Tibial artery (tissue), 4 donors: ENCODE measurements at regions of chr2 and their contacts with region 1.

Region 1: DNA sequence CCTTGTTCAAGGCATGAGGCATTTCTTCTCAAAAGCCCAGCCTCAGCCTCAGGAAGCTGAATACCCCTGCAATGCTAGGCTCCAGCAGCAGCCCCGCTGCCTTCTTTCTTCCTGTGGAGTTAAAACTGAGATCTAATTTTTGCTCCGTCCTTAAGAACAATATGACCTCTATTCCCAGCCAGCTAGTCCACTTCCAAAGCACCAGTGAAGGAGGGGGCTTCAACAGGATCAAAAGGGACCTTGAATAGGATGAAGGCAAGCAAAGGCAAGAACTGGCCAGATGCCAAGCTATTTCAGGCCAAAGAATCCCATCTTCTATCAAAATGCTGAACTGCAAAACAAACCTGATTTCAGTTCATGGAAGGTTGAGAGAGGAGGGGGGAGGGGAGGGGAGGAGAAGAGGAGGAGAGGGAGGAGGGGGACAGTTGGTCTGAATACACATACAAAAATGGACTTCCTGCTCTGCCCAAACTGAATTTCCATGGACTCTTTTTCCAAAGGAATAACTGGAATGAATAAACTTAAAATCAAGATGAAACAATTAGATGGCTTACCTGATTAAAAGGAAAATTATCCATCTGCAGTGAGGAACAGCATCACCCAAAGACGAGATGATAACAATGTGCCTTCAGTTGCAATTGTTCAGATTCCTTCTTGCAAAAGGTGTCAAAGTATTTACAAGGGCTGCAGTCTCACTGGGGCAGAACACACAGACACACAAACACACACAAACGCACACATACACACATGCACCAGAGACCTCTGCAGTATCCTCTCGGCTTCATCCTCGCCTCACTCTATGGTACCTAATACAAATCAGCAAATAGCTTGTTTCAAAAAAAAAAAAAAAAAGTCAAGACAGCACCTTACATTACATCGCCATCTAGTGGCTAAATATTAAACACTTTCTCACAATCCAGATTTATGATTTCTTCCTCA is at the start of gene SCN1A:
- DNase-seq: no peak
- H3K4me3 ChIP-seq: no peak within 1 kb of the TSS
- H3K27ac ChIP-seq: no peak within 1 kb of the TSS
- H3K4me1 ChIP-seq: peaks cover 0 to 6% (median 2%) of the 10 kb centered on the region in 4 donors
- H3K27me3 ChIP-seq: peaks cover 0 to 4% of the 10 kb centered on the region in 2 donors
- CTCF ChIP-seq: peak; percentile 41 to 47

Region 2: DNA sequence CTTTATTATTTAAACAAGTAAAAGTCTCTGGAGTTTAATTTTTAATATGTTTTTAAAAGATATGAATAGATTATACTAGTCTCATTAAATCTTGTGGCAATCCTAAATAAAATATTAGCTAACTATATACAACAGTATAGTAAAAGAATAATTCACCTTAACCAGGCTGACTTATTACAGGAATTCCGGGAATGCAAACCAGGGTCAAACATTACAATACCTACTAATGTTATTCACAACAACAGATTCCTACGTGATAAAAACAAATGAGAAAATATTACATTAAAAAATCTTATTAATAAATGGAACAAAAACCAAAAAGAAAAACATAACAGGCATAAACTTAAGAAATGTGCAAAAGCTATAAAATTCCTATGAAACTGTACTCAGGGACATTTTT is 194.3 kb before region 1 on chr2:
- intact Hi-C with region 1: no loop called
- DNase-seq: no peak
- H3K4me3 ChIP-seq: no peak overlapping the region
- H3K27ac ChIP-seq: no peak overlapping the region
- H3K4me1 ChIP-seq: no peaks in the 10 kb centered on the region
- H3K27me3 ChIP-seq: no peaks in the 10 kb centered on the region
- CTCF ChIP-seq: no peak

Region 3: GRCh38 chr2:165953655-165954606 is 173.6 kb before region 1 on chr2 and contains the start of gene TTC21B:
- intact Hi-C with region 1: loop called (anchors 5 kb)
- DNase-seq: peak; percentile 95 to 96
- H3K4me3 ChIP-seq: peak within 1 kb of the TSS; percentile 77 to 89
- H3K27ac ChIP-seq: peak within 1 kb of the TSS; percentile 83 to 88
- H3K4me1 ChIP-seq: peaks cover 0 to 42% (median 15%) of the 10 kb centered on the region in 4 donors
- H3K27me3 ChIP-seq: no peaks in the 10 kb centered on the region
- CTCF ChIP-seq: peak; percentile 74 to 82

Region 4: GRCh38 chr2:166031054-166031453 is 96.4 kb before region 1 on chr2:
- intact Hi-C with region 1: no loop called
- DNase-seq: no peak
- H3K4me3 ChIP-seq: no peak overlapping the region
- H3K27ac ChIP-seq: no peak overlapping the region
- H3K4me1 ChIP-seq: no peaks in the 10 kb centered on the region
- H3K27me3 ChIP-seq: no peaks in the 10 kb centered on the region
- CTCF ChIP-seq: no peak